GM10248 (cell line): ENCODE measurements at regions of chr11 and their contacts with region 1.

Region 1: GRCh38 chr11:115924744-115925567 is 420.7 kb upstream of the CADM1 start:
- DNase-seq: peak; percentile 66
- CTCF ChIP-seq: no peak

Region 2: GRCh38 chr11:115941481-115941993 is 16.6 kb after region 1 on chr11:
- CTCF ChIA-PET with region 1: interaction called, 81 read pairs
- POLR2A ChIA-PET with region 1: interaction called, 3 read pairs
- DNase-seq: no peak
- CTCF ChIP-seq: peak; percentile 24